Activated CD4-positive, alpha-beta T cell treated with anti-CD3 and anti-CD28 coated beads for 36 hours (primary cell): ENCODE measurements at regions of chr3 and their contacts with region 1.

Region 1: GRCh38 chr3:133805527-133806475 is at the start of gene SRPRB:
- DNase-seq: peak; percentile 98
- ATAC-seq: peak; percentile 99
- H3K4me3 Mint-ChIP-seq: peak within 1 kb of the TSS; percentile 93
- H3K27ac Mint-ChIP-seq: peak within 1 kb of the TSS; percentile 98
- H3K4me1 Mint-ChIP-seq: peaks cover 39% of the 10 kb centered on the region
- H3K27me3 Mint-ChIP-seq: peaks cover 6% of the 10 kb centered on the region
- total RNA-seq, gene SRPRB: 42.7 to 66.2 TPM

Region 2: DNA sequence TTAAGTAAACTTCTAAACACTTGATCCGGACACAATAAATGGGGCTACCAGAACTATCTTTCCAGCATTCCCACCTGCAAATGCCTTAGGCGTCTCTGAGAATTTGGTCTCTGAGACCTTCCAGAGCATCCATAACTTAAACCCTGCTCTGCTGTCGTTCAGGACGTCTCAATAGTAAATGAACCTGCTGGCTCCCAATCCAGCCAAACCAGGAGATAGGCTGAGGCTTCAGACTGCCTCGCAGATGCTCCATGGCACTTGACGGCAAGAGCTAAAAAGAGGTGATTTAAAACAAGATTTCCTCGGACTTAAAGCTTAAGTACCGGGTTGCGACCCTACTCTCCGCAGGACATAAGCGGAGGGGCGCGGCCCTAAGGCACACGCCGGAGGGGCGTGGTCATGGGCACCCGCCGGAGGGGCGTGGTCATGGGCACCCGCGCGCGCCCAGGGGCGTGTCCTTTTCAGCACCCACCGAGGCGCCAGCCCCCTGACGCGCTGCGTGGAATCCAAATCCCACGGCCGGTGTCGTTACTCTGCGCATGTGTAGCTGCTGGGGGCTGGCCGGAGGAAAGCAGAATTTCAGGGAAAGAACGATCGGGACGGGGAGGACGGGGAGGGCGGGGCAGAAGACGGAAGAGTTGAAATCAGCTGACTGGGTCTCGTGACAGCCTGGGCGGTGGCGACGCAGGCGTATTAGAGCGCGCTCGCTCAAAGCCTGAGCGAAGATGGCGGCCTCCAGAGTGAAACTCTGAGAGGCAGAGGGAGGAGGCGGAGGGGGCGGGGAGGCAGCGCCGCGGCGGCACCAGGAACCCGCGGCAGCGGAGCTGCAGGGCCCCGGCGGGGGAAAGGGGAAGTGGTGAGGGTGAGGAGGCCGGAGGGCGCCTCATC is 1388.8 kb before region 1 on chr3 and contains the start of gene DNAJC13:
- CTCF ChIA-PET with region 1: no interaction called
- POLR2A ChIA-PET with region 1: no interaction called
- intact Hi-C with region 1: loop called in 1 of 2 experiments (anchors 5 kb)
- DNase-seq: peak; percentile 95
- ATAC-seq: peak; percentile 94
- H3K4me3 Mint-ChIP-seq: peak within 1 kb of the TSS; percentile 87
- H3K27ac Mint-ChIP-seq: peak within 1 kb of the TSS; percentile 94
- H3K4me1 Mint-ChIP-seq: peaks cover 37% of the 10 kb centered on the region
- H3K27me3 Mint-ChIP-seq: no peaks in the 10 kb centered on the region
- total RNA-seq, gene DNAJC13: 29.9 to 33.5 TPM

Region 3: DNA sequence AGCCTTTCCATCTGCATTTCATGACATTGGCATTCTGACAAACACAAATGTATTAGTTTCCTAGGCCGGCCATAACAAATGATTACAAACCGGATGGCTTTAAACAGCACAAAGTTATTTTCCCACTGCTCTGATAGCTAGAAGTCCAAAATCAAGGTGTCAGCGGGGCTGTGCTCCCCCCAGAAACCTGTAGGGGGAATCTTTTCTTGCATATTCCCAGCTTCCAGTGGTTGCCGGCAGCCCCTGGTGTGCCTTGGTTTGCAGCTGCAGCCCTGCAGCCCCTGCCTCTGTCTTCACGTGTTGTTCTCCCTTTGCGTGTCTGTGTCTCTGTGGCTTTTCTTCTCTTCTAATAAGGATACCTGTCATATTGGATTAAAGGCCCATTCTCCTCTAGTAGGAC is 311.3 kb before region 1 on chr3:
- CTCF ChIA-PET with region 1: interaction called, 3 read pairs
- POLR2A ChIA-PET with region 1: no interaction called
- intact Hi-C with region 1: loop called in 1 of 2 experiments (anchors 10 kb)
- DNase-seq: peak; percentile 36
- ATAC-seq: no peak
- H3K4me3 Mint-ChIP-seq: no peak overlapping the region
- H3K27ac Mint-ChIP-seq: no peak overlapping the region
- H3K4me1 Mint-ChIP-seq: peaks cover 45% of the 10 kb centered on the region
- H3K27me3 Mint-ChIP-seq: no peaks in the 10 kb centered on the region

Region 4: GRCh38 chr3:133661454-133662277 is 144.1 kb before region 1 on chr3 and contains the start of gene TOPBP1:
- CTCF ChIA-PET with region 1: interaction called, 8 read pairs
- POLR2A ChIA-PET with region 1: no interaction called
- intact Hi-C with region 1: loop called (anchors 1 kb)
- DNase-seq: peak; percentile 94
- ATAC-seq: peak; percentile 85
- H3K4me3 Mint-ChIP-seq: peak within 1 kb of the TSS; percentile 91
- H3K27ac Mint-ChIP-seq: peak within 1 kb of the TSS; percentile 98
- H3K4me1 Mint-ChIP-seq: peaks cover 33% of the 10 kb centered on the region
- H3K27me3 Mint-ChIP-seq: no peaks in the 10 kb centered on the region
- total RNA-seq, gene TOPBP1: 80.9 to 94.6 TPM

Region 5: DNA sequence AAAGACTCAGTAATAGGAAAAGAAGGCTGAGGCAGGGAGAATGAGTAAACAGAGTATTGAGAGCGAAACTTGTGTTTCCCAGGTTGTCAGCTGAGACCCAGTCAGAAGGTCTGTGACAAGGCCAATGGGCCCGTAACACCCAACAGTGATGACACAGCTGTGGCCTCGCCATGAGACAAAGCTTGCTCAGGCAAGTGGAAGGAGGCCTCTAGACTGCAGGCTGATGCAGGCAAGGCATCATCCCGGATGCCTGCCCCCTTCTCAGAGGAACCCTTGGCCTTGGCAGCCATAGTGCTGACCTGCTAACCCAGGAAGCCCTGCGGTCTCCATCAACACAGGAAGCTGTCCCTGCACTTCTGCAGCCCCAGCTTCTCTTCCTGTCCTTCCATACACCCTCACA is 74.5 kb after region 1 on chr3:
- CTCF ChIA-PET with region 1: no interaction called
- POLR2A ChIA-PET with region 1: no interaction called
- intact Hi-C with region 1: no loop called
- DNase-seq: peak; percentile 46
- ATAC-seq: peak; percentile 76
- H3K4me3 Mint-ChIP-seq: no peak overlapping the region
- H3K27ac Mint-ChIP-seq: no peak overlapping the region
- H3K4me1 Mint-ChIP-seq: peaks cover 5% of the 10 kb centered on the region
- H3K27me3 Mint-ChIP-seq: no peaks in the 10 kb centered on the region

Region 6: GRCh38 chr3:133927540-133928066 is 121.8 kb after region 1 on chr3:
- CTCF ChIA-PET with region 1: no interaction called
- POLR2A ChIA-PET with region 1: no interaction called
- intact Hi-C with region 1: loop called in 1 of 2 experiments (anchors 1 kb)
- DNase-seq: peak; percentile 83
- ATAC-seq: peak; percentile 82
- H3K4me3 Mint-ChIP-seq: peak overlapping the region; percentile 38
- H3K27ac Mint-ChIP-seq: no peak overlapping the region
- H3K4me1 Mint-ChIP-seq: peaks cover 6% of the 10 kb centered on the region
- H3K27me3 Mint-ChIP-seq: peaks cover 16% of the 10 kb centered on the region